WTC11 (cell line): ENCODE measurements at regions of chr7 and their contacts with region 1.

Region 1: DNA sequence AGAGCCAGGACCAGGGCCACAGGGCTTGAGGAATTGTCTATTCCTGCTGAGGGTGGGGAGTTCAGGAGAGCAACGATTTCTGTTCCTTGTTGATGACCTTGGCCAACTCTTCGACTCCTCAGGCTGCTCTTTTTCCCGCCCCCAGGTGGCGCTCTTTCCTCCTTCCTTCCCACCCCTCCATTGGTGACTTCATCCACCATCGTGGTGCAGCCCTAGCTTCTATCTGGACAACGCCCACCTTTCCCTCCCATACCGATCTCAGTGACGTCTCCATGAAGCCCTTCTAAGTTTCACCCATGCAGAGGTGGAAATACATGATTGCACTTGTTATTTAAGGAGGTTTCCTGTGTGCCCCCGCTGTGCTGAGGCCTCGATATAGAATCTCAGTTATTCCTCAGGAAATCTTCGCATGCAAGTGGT is 22.1 kb upstream of the CARD11 start:
- DNase-seq: peak; percentile 81
- ATAC-seq: peak; percentile 97
- H3K4me3 Mint-ChIP-seq: no peak overlapping the region
- H3K27ac Mint-ChIP-seq: no peak overlapping the region
- H3K4me1 Mint-ChIP-seq: peaks cover 17% of the 10 kb centered on the region
- H3K27me3 Mint-ChIP-seq: no peaks in the 10 kb centered on the region; the same call in 1 of the 2 replicates
- CTCF ChIP-seq: peak; percentile 88

Region 2: GRCh38 chr7:3092468-3092867 is 26.7 kb after region 1 on chr7:
- CTCF ChIA-PET with region 1: interaction called, 15 read pairs
- POLR2A ChIA-PET with region 1: no interaction called
- DNase-seq: no peak
- ATAC-seq: no peak
- H3K4me3 Mint-ChIP-seq: no peak overlapping the region
- H3K27ac Mint-ChIP-seq: no peak overlapping the region
- H3K4me1 Mint-ChIP-seq: peaks cover 7% of the 10 kb centered on the region
- H3K27me3 Mint-ChIP-seq: peaks cover 3% of the 10 kb centered on the region; the same call in 1 of the 2 replicates
- CTCF ChIP-seq: no peak

Region 3: GRCh38 chr7:4416396-4417056 is 1350.8 kb after region 1 on chr7:
- CTCF ChIA-PET with region 1: no interaction called
- POLR2A ChIA-PET with region 1: no interaction called
- DNase-seq: no peak
- ATAC-seq: no peak
- H3K4me3 Mint-ChIP-seq: no peak overlapping the region
- H3K27ac Mint-ChIP-seq: no peak overlapping the region
- H3K4me1 Mint-ChIP-seq: no peaks in the 10 kb centered on the region
- H3K27me3 Mint-ChIP-seq: peaks cover 6% of the 10 kb centered on the region; the same call in 1 of the 2 replicates
- CTCF ChIP-seq: no peak